Motor neuron (in vitro differentiated cells): ENCODE measurements at regions of chr3 and their contacts with region 1.

Region 1: DNA sequence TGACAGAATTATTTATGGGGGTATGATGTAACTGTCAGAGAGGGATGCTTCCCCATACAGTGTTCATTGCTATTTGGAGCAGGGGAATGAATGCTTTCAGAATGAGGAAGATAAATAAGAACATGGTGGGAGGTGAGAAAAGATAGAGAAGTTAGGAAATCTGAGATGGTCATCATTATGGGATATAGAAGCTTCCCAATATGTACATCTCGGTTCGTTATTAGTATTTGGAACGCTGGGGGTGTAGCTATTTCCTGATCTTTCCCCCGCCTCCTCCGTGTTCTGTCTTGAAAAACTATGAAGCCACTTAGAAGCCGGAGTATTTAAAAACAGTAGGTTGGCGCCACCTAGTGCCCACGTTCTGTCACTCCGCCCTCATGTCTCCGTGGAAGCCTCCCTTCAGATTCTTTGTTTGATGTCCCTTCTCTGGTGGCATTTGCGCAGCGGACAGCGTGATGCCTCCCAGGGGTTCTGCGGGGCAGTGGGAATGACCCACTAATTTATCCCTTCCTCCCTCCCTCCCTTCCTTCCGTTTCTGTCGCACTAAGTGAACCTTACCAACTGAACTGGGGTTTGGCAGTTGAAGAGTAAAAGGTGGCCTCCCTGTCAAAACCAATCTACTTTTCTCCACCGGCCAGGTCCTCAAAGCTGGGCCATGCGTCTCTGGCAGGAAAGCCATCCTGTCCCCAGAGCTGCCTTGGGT is 184.5 kb downstream of the FEZF2 start:
- ATAC-seq: peak; percentile 75 to 92 (median 86)
- H3K4me3 ChIP-seq: peak overlapping the region in 2 of 5 donors; percentile 18 to 19
- H3K27ac ChIP-seq: no peak overlapping the region
- H3K4me1 ChIP-seq: peaks cover 10 to 16% of the 10 kb centered on the region in 2 donors

Region 2: GRCh38 chr3:61858056-61858455 is 330.8 kb before region 1 on chr3:
- in situ Hi-C with region 1: loop called in 3 of 9 experiments (anchors 25 kb)
- ATAC-seq: peak in 4 of 8 experiments; percentile 39 to 59 (median 53)
- H3K4me3 ChIP-seq: no peak overlapping the region
- H3K27ac ChIP-seq: no peak overlapping the region
- H3K4me1 ChIP-seq: peaks cover 0 to 14% of the 10 kb centered on the region in 2 donors

Region 3: DNA sequence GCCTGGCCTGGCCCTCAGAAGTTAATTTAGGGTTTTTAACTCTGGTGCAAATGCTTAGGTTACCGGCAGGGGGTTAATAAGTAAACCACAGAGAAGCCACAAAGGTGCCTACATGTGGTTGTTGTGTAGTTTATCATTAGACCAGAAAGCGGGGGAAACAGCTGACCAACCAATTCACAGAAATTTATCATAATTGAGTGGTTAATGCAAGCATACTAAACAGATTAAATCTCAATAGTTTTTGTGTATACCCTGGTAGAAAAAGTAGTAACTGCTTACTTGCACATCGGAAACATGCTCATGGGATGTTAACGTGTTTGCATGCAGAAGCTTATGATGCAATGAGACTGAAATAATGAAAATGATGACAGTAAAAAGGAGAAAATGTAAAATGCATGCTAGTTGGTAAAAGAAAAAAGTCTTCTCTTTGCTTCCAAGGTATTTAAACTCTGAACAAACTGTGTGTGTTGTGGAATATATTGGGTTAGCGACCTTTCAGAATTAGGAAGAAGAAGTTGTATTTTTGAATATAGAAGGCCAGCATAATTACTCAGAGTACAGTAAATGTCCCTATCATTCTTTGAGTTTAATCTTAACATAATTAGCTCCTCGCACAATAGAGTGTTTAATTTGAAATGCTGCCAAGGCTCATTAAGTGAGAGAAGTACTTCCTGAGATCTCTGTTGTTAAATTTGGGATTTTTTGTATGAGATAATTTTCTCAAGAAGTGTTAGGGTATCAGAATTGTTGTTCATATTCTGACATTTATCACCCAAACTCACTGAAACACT is 311.3 kb before region 1 on chr3:
- in situ Hi-C with region 1: loop called in 4 of 9 experiments (anchors 10 to 25 kb)
- ATAC-seq: peak in 4 of 8 experiments; percentile 25 to 69 (median 58)
- H3K4me3 ChIP-seq: no peak overlapping the region
- H3K27ac ChIP-seq: peak overlapping the region in 1 of 2 donors; percentile 21
- H3K4me1 ChIP-seq: peaks cover 21 to 28% of the 10 kb centered on the region in 2 donors

Region 4: GRCh38 chr3:62011666-62012065 is 177.2 kb before region 1 on chr3:
- in situ Hi-C with region 1: no loop called
- ATAC-seq: no peak
- H3K4me3 ChIP-seq: no peak overlapping the region
- H3K27ac ChIP-seq: no peak overlapping the region
- H3K4me1 ChIP-seq: peaks cover 0 to 9% of the 10 kb centered on the region in 2 donors